Activated naive CD4-positive, alpha-beta T cell treated with anti-CD3 and anti-CD28 coated beads, Interleukin-2, amount 10 ng/mL, durations not matched to agents 7 days and 5 days (primary cell): ENCODE measurements at regions of chr10 and their contacts with region 1.

Region 1: GRCh38 chr10:47024399-47025252 is 113.4 kb downstream of the PTPN20 start:
- DNase-seq: peak; percentile 81
- H3K4me3 Mint-ChIP-seq: no peak overlapping the region
- H3K27ac Mint-ChIP-seq: no peak overlapping the region
- H3K4me1 Mint-ChIP-seq: no peaks in the 10 kb centered on the region
- H3K27me3 Mint-ChIP-seq: peaks cover 3% of the 10 kb centered on the region

Region 2: DNA sequence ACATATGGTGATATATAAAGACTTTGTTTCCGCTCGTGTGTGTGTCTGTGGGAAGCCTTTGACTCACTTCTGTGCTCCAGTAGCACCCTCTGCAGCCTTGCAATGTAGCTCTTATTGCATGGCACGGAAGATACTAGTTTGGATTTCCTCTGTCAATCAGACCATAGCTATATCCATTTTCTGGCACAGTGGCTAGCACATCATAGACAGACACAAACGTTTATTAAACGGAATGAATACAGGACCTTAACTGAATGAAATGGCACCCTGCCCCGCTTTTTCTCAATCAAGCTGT is 237.4 kb before region 1 on chr10:
- CTCF ChIA-PET with region 1: no interaction called
- DNase-seq: peak; percentile 42
- H3K4me3 Mint-ChIP-seq: peak overlapping the region; percentile 88
- H3K27ac Mint-ChIP-seq: peak overlapping the region; percentile 5
- H3K4me1 Mint-ChIP-seq: peaks cover 3% of the 10 kb centered on the region
- H3K27me3 Mint-ChIP-seq: peaks cover 11% of the 10 kb centered on the region

Region 3: GRCh38 chr10:47311932-47312662 is 287.5 kb after region 1 on chr10:
- CTCF ChIA-PET with region 1: interaction called, 78 read pairs
- DNase-seq: peak; percentile 91
- H3K4me3 Mint-ChIP-seq: peak overlapping the region; percentile 21
- H3K27ac Mint-ChIP-seq: peak overlapping the region; percentile 87
- H3K4me1 Mint-ChIP-seq: peaks cover 25% of the 10 kb centered on the region
- H3K27me3 Mint-ChIP-seq: peaks cover 15% of the 10 kb centered on the region

Region 4: GRCh38 chr10:47323636-47324296 is 299.1 kb after region 1 on chr10:
- CTCF ChIA-PET with region 1: interaction called, 10 read pairs
- DNase-seq: no peak
- H3K4me3 Mint-ChIP-seq: no peak overlapping the region
- H3K27ac Mint-ChIP-seq: no peak overlapping the region
- H3K4me1 Mint-ChIP-seq: no peaks in the 10 kb centered on the region
- H3K27me3 Mint-ChIP-seq: peaks cover 3% of the 10 kb centered on the region

Region 5: GRCh38 chr10:47340608-47341170 is 316.1 kb after region 1 on chr10:
- CTCF ChIA-PET with region 1: interaction called, 35 read pairs
- DNase-seq: peak; percentile 79
- H3K4me3 Mint-ChIP-seq: no peak overlapping the region
- H3K27ac Mint-ChIP-seq: no peak overlapping the region
- H3K4me1 Mint-ChIP-seq: no peaks in the 10 kb centered on the region
- H3K27me3 Mint-ChIP-seq: peaks cover 16% of the 10 kb centered on the region